ENCODE measurements at regions of chr3 and their contacts with region 1.

Region 1: GRCh38 chr3:62665598-62666437 is 209.4 kb downstream of the CADPS start:
- DNase-seq: peak; percentile 50
- H3K4me3 ChIP-seq: no peak overlapping the region
- H3K27ac ChIP-seq: no peak overlapping the region
- H3K4me1 ChIP-seq: no peaks in the 10 kb centered on the region
- H3K27me3 ChIP-seq: no peaks in the 10 kb centered on the region
- CTCF ChIP-seq: peak; percentile 86 to 95

Region 2: GRCh38 chr3:62622553-62623193 is 43.1 kb before region 1 on chr3:
- CTCF ChIA-PET with region 1: no interaction called
- dilution Hi-C with region 1: no loop called
- in situ Hi-C with region 1: no loop called
- intact Hi-C with region 1: loop called (anchors 2 kb)
- DNase-seq: peak; percentile 40
- H3K4me3 ChIP-seq: no peak overlapping the region
- H3K27ac ChIP-seq: no peak overlapping the region
- H3K4me1 ChIP-seq: no peaks in the 10 kb centered on the region
- H3K27me3 ChIP-seq: no peaks in the 10 kb centered on the region
- CTCF ChIP-seq: peak; percentile 52 to 74

Region 3: DNA sequence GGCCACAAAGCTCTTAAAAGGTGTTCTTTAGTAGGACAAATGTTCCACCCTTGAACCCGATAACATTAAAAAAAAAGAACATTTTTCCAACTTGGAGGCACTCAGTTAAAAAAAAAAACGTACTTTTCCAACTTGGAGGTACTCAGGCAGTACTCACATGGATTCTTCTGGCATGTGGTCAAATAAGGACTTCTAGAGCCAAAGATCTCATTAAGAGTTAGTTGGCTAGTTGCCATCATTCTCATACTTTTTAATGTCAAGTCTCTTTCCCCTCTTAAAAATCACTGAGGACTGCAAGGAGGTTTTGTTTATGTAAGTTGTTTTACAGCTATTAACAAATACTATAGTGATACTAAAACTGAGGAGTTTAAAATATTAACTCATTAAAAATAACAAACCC is 108.4 kb after region 1 on chr3:
- CTCF ChIA-PET with region 1: no interaction called
- dilution Hi-C with region 1: no loop called
- in situ Hi-C with region 1: no loop called
- intact Hi-C with region 1: loop called (anchors 10 kb)
- DNase-seq: no peak
- H3K4me3 ChIP-seq: no peak overlapping the region
- H3K27ac ChIP-seq: no peak overlapping the region
- H3K4me1 ChIP-seq: no peaks in the 10 kb centered on the region
- H3K27me3 ChIP-seq: no peaks in the 10 kb centered on the region
- CTCF ChIP-seq: no peak

Region 4: DNA sequence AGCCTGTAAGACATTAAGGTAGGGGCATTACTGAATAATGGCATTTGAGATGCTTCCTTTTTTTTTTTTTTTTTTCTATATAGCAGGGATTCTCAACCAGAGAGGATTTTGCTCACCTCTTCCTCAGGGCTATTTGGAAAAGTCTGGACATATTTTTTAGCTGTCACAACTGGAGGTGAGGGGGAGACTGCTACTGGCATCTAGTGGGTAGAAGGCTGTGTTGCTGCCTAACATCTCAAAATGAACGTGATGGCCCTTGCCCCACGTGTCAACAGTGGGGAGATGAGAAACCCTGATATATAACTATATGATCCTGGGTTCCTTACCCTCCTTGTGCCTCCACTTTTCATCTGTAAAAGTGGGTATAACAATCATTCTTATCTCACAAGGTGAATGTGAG is 137.5 kb after region 1 on chr3:
- CTCF ChIA-PET with region 1: no interaction called
- dilution Hi-C with region 1: no loop called
- in situ Hi-C with region 1: no loop called
- intact Hi-C with region 1: loop called (anchors 10 kb)
- DNase-seq: no peak
- H3K4me3 ChIP-seq: no peak overlapping the region
- H3K27ac ChIP-seq: no peak overlapping the region
- H3K4me1 ChIP-seq: no peaks in the 10 kb centered on the region
- H3K27me3 ChIP-seq: no peaks in the 10 kb centered on the region
- CTCF ChIP-seq: peak; percentile 37 to 44

Region 5: GRCh38 chr3:63151897-63152296 is 486.1 kb after region 1 on chr3:
- CTCF ChIA-PET with region 1: no interaction called
- dilution Hi-C with region 1: no loop called
- in situ Hi-C with region 1: no loop called
- intact Hi-C with region 1: no loop called
- DNase-seq: no peak
- H3K4me3 ChIP-seq: no peak overlapping the region
- H3K27ac ChIP-seq: no peak overlapping the region
- H3K4me1 ChIP-seq: no peaks in the 10 kb centered on the region
- H3K27me3 ChIP-seq: no peaks in the 10 kb centered on the region
- CTCF ChIP-seq: no peak

Region 6: DNA sequence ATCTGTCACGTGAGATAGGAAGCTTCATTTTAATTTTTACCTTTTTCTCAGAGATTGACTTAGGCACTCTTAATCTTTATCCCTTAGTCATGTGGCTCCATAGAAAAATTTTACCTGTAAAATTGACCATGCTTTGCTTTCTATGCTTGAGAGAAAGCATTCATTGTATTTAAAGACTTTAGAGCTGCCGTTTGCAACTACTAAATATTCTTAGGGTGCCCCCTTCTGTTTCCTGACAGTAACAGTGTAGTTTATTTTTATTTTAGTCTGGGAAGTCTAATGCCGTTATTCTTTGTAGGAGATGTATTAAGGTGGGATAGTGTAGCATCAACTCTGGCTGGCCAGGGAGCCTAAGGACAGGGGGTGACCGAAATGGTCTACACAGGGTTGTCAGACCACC is 527.8 kb after region 1 on chr3:
- CTCF ChIA-PET with region 1: no interaction called
- dilution Hi-C with region 1: no loop called
- in situ Hi-C with region 1: no loop called
- intact Hi-C with region 1: loop called (anchors 1 kb)
- DNase-seq: peak; percentile 9
- H3K4me3 ChIP-seq: no peak overlapping the region
- H3K27ac ChIP-seq: no peak overlapping the region
- H3K4me1 ChIP-seq: no peaks in the 10 kb centered on the region
- H3K27me3 ChIP-seq: peaks cover 3% of the 10 kb centered on the region
- CTCF ChIP-seq: peak; percentile 34 to 65

Region 7: GRCh38 chr3:63228087-63229023 is 562.5 kb after region 1 on chr3:
- CTCF ChIA-PET with region 1: interaction called, 3 read pairs
- dilution Hi-C with region 1: no loop called
- in situ Hi-C with region 1: loop called (anchors 10 to 25 kb)
- intact Hi-C with region 1: loop called (anchors 1 kb)
- DNase-seq: peak; percentile 33
- H3K4me3 ChIP-seq: no peak overlapping the region
- H3K27ac ChIP-seq: no peak overlapping the region
- H3K4me1 ChIP-seq: no peaks in the 10 kb centered on the region
- H3K27me3 ChIP-seq: no peaks in the 10 kb centered on the region
- CTCF ChIP-seq: peak; percentile 62 to 74

Region 8: DNA sequence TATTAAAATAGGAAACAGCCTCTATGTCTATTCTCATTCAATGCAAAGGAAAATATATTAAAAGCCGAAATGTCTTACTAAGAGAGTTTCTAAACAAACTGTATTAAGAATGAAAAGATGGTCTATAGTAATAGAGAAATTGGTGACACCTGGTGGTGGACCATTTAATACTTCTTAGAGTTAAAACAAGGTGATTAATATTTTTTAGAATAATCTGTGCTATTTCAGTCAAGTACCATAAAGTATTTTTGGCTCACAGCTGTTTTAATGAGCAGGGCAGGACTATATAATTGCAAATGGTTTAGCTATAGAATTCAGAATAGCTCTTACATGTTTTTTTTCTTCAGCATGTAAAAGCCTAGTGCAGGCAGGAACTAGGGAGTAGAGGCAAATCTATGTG is 668.0 kb after region 1 on chr3:
- CTCF ChIA-PET with region 1: no interaction called
- dilution Hi-C with region 1: no loop called
- in situ Hi-C with region 1: no loop called
- intact Hi-C with region 1: loop called (anchors 5 kb)
- DNase-seq: no peak
- H3K4me3 ChIP-seq: no peak overlapping the region
- H3K27ac ChIP-seq: no peak overlapping the region
- H3K4me1 ChIP-seq: no peaks in the 10 kb centered on the region
- H3K27me3 ChIP-seq: peaks cover 2% of the 10 kb centered on the region
- CTCF ChIP-seq: peak; percentile 18 to 34

Measured in mammary epithelial cell (primary cell).